Ascending aorta (tissue), 2 donors: ENCODE measurements at regions of chr13 and their contacts with region 1.

Region 1: GRCh38 chr13:40770934-40771618 is at the start of gene MRPS31:
- DNase-seq: peak; percentile 81 to 97
- H3K4me3 ChIP-seq: peak within 1 kb of the TSS; percentile 59 to 75
- H3K27ac ChIP-seq: peak within 1 kb of the TSS; percentile 71 to 83
- H3K4me1 ChIP-seq: peaks cover 0 to 6% of the 10 kb centered on the region in 2 donors
- H3K27me3 ChIP-seq: no peaks in the 10 kb centered on the region
- CTCF ChIP-seq: peak in 1 of 3 experiments; percentile 2
- total RNA-seq, gene MRPS31: 22.8 TPM

Region 2: DNA sequence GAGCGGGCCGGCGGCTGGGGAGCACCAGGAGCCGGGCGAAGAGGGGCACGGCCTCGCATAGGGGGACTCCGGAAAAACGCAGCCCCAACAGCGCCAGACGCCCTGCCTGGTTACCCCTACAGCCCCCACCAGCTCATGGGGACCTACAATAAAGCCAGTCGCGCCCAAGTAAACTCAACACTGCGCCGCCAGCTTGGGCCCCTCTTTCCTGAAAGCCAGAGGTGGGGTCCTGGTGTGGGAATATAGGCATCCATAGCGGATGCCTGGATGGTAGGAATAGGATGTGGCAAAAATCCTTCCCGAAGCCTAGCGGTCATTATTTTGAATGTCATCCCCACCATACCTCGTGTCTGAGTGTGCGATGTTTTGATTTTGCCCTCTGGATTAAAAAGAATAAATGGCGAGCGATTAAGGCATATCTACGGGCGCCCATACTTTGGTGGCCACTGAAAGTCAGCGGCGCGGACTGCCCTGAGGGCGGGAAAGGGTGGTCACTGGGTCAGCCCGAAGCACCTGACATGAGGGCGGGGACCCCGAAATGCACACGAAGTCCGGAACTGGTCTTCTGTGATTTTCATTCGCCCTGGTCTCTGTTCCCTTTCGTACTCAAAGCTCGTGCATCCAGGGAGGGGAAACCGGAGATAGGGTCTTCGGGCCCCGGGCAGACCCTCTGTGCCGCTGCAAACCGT is 1733.1 kb before region 1 on chr13 and contains the starts of genes NHLRC3 and PROSER1:
- intact Hi-C with region 1: loop called (anchors 10 kb)
- DNase-seq: peak; percentile 76 to 97
- H3K4me3 ChIP-seq: peak within 1 kb of the TSS; percentile 97 to 100
- H3K27ac ChIP-seq: peak within 1 kb of the TSS; percentile 78 to 88
- H3K4me1 ChIP-seq: peaks cover 0 to 16% of the 10 kb centered on the region in 2 donors
- H3K27me3 ChIP-seq: no peaks in the 10 kb centered on the region
- CTCF ChIP-seq: no peak
- total RNA-seq, gene NHLRC3: 7.1 TPM
- total RNA-seq, gene PROSER1: 60.7 TPM

Region 3: DNA sequence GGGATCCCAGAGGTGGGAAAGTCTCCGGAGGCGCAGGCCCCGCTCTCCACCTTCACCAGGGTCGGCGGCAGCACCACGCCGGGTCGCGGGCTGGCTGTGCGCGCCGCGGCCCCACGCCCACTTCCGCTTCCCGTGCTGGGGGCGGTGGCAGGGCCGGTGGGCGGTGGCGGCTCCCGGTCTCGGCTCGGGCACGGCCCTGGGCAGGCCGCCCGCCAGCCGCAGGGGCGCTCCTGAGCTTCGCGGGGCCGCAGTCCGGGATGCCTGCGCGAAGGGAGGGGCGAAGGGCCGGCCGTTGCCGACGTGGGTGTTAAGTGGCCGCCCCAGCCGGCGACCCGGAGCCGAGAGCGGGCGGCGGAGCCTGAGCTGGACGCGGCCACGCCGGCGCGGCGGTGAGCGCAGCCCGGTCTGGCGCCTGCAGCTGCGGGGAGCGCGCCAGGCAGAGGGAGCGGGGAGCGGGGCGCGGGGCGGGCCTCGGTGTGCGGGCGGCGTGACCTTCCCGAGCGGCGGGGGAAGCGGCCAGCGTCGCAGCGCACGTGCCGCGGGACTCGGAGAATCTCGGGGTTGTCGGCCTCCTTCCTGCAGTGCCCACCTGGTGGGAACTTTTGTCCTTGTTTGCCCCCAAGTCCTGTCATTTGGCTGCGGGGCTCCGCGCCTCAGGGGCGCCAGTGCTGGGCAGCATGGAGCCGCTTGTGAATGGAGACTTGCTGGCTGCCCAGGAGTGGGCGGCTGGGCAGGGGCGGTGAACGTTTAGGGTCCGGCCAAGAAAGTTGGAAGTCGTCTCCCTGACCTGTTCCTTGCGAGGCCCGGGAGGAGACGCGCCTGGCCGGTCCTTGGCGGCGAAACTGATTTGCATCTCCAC is 18.4 kb after region 1 on chr13 and contains the start of gene SLC25A15:
- intact Hi-C with region 1: loop called (anchors 1 kb)
- DNase-seq: peak in 1 of 2 donors; percentile 89
- H3K4me3 ChIP-seq: peak within 1 kb of the TSS; percentile 76 to 79
- H3K27ac ChIP-seq: peak within 1 kb of the TSS; percentile 71 to 83
- H3K4me1 ChIP-seq: no peaks in the 10 kb centered on the region
- H3K27me3 ChIP-seq: no peaks in the 10 kb centered on the region
- CTCF ChIP-seq: no peak
- total RNA-seq, gene SLC25A15: 5.5 TPM

Region 4: DNA sequence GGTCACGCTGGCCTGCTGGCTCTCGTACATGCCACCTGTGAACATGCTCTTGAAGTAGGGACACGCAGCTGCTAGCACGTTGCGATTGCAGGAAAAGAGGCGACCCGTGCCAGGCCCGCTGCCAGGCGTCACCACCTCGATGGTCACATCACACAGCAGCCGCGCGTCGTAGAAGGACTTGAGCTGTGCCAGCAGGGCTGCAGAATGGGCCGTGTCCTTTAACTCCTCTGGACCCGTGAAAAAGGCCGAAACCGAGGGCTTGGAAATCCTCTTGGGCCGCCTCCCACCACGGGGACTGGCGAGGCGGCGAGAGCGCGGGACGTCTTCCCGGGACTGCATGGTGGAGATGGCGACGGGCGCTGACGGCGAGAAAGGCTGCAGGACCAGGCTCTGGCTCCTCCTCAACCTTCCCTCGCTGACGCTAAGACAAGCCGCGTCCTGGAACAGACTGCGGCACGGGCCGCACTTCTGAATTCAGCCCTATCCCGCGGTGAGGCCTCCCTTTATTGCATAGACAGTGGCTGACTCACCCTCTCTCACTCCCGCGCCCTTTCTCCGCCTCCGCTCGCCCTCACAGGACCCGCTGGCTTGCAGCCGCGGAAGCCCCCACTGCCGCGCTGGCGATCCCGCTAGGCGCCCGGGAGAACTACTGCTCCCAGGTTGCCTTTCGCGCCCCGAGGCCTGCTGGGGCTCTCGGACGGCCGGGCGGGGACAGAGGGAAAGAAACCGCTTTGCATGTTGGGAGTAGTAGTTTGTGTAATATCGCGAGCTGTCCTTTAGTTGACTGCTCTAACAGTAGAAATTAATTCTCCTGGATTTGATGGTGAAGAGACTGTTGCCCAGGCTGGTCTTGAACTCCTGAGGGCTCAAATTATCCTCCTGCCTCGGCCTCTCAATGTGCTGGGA is 423.1 kb after region 1 on chr13 and contains the start of gene KBTBD7:
- intact Hi-C with region 1: loop called (anchors 10 kb)
- DNase-seq: peak; percentile 76 to 97
- H3K4me3 ChIP-seq: peak within 1 kb of the TSS; percentile 70 to 94
- H3K27ac ChIP-seq: peak within 1 kb of the TSS; percentile 78 to 86
- H3K4me1 ChIP-seq: peaks cover 0 to 8% of the 10 kb centered on the region in 2 donors
- H3K27me3 ChIP-seq: no peaks in the 10 kb centered on the region
- CTCF ChIP-seq: peak in 2 of 3 experiments; percentile 5 to 11
- total RNA-seq, gene KBTBD7: 2.1 TPM

Region 5: GRCh38 chr13:42048682-42049453 is 1277.8 kb after region 1 on chr13:
- intact Hi-C with region 1: loop called (anchors 2 kb)
- DNase-seq: peak; percentile 30 to 91
- H3K4me3 ChIP-seq: peak overlapping the region; percentile 86 to 96
- H3K27ac ChIP-seq: peak overlapping the region; percentile 91 to 99
- H3K4me1 ChIP-seq: peaks cover 2 to 8% of the 10 kb centered on the region in 2 donors
- H3K27me3 ChIP-seq: no peaks in the 10 kb centered on the region
- CTCF ChIP-seq: peak in 2 of 3 experiments; percentile 27 to 30